ENCODE measurements at regions of chr1 and their contacts with region 1.

Region 1: GRCh38 chr1:235160957-235161684 is at the start of gene RBM34:
- DNase-seq: peak; percentile 94
- H3K4me3 Mint-ChIP-seq: peak within 1 kb of the TSS; percentile 100
- H3K27ac Mint-ChIP-seq: peak within 1 kb of the TSS; percentile 99
- H3K4me1 Mint-ChIP-seq: peaks cover 26% of the 10 kb centered on the region
- H3K27me3 Mint-ChIP-seq: no peaks in the 10 kb centered on the region
- total RNA-seq, gene RBM34: 104 TPM

Region 2: GRCh38 chr1:235090401-235091069 is 70.6 kb before region 1 on chr1:
- CTCF ChIA-PET with region 1: no interaction called
- intact Hi-C with region 1: no loop called
- DNase-seq: no peak
- H3K4me3 Mint-ChIP-seq: no peak overlapping the region
- H3K27ac Mint-ChIP-seq: no peak overlapping the region
- H3K4me1 Mint-ChIP-seq: peaks cover 7% of the 10 kb centered on the region
- H3K27me3 Mint-ChIP-seq: peaks cover 2% of the 10 kb centered on the region

Region 3: DNA sequence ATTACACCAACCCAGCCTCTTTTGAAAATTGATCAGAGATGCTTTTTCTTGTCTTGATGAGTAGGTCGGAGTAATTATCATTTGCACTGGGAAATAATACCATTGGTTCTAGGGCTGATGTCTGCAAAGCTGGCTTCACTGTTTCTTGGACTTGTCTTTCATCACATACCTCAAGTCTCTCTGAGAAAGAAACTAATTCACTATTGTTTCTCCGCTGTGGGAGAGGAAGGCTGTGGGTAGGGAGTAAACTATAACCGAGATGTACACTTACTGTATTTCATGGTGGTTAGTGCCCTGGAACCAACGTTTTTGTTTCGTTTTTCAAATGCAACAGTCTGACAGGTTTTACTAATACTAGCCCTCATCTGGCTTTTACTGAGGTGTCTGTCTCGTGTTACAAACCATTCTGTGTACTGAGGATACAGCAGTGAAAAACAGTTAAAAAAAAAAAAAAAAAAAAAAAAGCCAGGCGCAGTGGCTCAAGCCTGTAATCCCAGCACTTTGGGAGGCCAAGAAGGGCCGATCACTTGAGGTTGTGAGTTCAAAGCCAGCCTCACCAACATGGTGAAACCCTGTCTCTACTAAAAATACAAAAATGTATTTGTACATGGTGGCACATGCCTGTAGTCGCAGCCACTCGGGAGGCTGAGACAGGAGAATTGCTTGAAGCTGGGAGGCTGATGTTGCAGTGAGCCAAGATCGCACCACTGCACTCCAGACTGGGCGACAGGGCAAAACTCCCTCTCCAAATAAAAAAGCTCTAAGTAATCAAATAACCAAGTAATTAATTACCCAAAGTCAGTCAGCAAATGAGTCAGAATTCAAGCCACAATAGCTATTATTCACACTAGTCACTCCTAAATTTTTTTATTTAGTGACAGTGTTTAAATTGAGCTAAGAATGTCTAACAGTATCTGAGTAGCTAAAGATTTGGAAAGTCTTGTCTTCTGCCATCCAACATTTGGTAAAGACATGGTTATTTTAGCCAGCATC is 55.8 kb before region 1 on chr1:
- CTCF ChIA-PET with region 1: interaction called, 4 read pairs
- intact Hi-C with region 1: loop called (anchors 1 kb)
- DNase-seq: no peak
- H3K4me3 Mint-ChIP-seq: no peak overlapping the region
- H3K27ac Mint-ChIP-seq: no peak overlapping the region
- H3K4me1 Mint-ChIP-seq: peaks cover 44% of the 10 kb centered on the region
- H3K27me3 Mint-ChIP-seq: no peaks in the 10 kb centered on the region

Region 4: GRCh38 chr1:235128456-235129328 is 32.4 kb before region 1 on chr1 and contains the start of gene TOMM20:
- CTCF ChIA-PET with region 1: no interaction called
- intact Hi-C with region 1: loop called (anchors 1 kb)
- DNase-seq: peak; percentile 98
- H3K4me3 Mint-ChIP-seq: peak within 1 kb of the TSS; percentile 96
- H3K27ac Mint-ChIP-seq: peak within 1 kb of the TSS; percentile 94
- H3K4me1 Mint-ChIP-seq: peaks cover 38% of the 10 kb centered on the region
- H3K27me3 Mint-ChIP-seq: no peaks in the 10 kb centered on the region
- total RNA-seq, gene TOMM20: 155 to 192 TPM

Region 5: DNA sequence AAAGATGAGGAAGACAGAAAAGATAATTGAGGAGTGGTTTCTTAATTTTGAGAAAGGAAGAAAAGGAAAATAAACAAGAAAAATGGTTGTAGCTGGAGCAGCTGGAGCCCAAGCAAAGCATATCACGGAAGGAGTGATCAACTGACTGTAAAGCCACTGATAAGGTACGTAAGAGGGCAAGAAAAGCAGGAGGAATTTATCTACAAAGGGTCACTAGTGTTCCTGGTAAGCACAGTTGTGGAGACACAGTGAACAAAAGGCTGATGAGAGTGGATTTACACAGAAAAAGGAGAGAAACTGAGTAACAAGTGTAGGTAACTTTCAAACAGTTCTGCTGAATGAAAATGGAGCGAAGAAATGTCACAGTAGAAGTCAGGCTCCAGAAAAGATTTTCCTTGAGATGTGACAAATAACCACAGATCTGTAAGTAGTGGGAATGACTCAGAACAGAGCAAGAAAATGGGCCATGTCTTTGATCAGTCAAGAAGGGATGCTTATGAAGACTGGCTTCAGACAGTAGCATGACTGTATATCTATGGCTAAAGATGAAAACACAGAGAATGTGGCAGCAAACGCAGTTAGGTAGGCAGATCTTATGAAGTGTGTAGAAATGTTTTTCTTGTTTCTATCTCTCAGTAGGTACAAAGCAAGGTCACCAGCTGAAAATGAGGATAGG is 45.5 kb after region 1 on chr1:
- CTCF ChIA-PET with region 1: no interaction called
- intact Hi-C with region 1: loop called (anchors 1 kb)
- DNase-seq: peak; percentile 35
- H3K4me3 Mint-ChIP-seq: peak overlapping the region; percentile 19
- H3K27ac Mint-ChIP-seq: peak overlapping the region; percentile 83
- H3K4me1 Mint-ChIP-seq: peaks cover 28% of the 10 kb centered on the region
- H3K27me3 Mint-ChIP-seq: no peaks in the 10 kb centered on the region

Region 6: GRCh38 chr1:235367000-235367908 is 206.1 kb after region 1 on chr1 and contains the start of gene TBCE:
- CTCF ChIA-PET with region 1: no interaction called
- intact Hi-C with region 1: loop called (anchors 2 kb)
- DNase-seq: peak; percentile 92
- H3K4me3 Mint-ChIP-seq: peak within 1 kb of the TSS; percentile 96
- H3K27ac Mint-ChIP-seq: peak within 1 kb of the TSS; percentile 90
- H3K4me1 Mint-ChIP-seq: peaks cover 27% of the 10 kb centered on the region
- H3K27me3 Mint-ChIP-seq: no peaks in the 10 kb centered on the region
- total RNA-seq, gene TBCE: 18.8 to 22.1 TPM

Region 7: DNA sequence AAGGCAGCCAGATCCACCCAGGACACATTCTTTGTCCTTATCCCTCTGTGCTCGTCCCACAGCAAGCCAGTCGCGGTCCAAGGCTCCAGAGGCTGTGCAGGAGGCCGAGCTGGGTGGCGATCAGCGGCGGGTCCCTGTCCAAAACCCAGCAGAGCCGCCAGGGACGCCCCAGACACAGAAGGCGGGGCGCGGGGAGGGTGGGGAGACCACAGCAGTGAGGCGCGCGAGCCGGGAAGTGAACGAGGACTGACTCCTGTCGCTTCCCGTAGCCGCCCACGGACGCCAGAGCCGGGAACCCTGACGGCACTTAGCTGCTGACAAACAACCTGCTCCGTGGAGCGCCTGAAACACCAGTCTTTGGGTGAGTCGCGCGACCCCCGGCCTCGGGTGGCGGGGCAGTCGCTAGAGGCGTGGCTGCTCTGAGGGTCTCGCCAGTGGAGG is 1362.6 kb after region 1 on chr1 and contains the start of gene LGALS8:
- CTCF ChIA-PET with region 1: no interaction called
- intact Hi-C with region 1: loop called (anchors 5 kb)
- DNase-seq: peak; percentile 91
- H3K4me3 Mint-ChIP-seq: peak within 1 kb of the TSS; percentile 96
- H3K27ac Mint-ChIP-seq: peak within 1 kb of the TSS; percentile 97
- H3K4me1 Mint-ChIP-seq: peaks cover 9% of the 10 kb centered on the region
- H3K27me3 Mint-ChIP-seq: no peaks in the 10 kb centered on the region
- total RNA-seq, gene LGALS8: 78.6 to 89.4 TPM

Region 8: DNA sequence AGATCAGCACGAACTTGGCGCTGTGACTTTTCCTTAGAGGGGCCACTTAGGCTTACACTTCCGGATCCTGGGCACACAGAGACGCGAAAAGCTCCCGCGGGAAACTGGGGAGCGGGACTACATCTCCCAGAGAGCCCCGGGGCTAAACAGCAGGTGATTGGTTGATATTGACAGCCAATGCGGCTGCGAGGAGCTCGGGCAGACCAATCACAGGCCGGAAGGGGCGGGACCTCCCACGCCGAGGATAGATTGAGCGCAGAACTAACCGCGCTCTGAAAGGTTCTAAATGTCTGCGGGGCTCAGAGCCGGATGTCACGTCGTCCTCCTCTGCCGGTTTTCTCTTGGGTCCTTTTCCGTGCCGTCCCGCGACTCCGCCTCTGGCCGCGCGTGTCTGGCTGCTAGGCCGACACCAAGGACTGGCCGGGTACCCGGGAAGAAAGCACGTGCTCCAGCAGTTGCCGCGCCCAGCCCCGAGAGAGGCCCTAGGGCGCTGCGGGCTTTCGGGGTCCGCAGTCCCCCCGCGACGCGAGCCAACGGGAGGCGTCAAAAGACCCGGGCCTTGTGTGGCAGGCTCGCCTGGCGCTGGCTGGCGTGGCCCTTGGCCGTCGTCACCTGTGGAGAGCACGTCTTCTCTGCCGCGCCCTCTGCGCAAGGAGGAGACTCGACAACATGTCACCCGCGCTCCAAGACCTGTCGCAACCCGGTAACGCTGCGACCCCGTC is 1634.1 kb after region 1 on chr1 and contains the start of gene MTR:
- CTCF ChIA-PET with region 1: no interaction called
- intact Hi-C with region 1: loop called (anchors 10 kb)
- DNase-seq: peak; percentile 98
- H3K4me3 Mint-ChIP-seq: peak within 1 kb of the TSS; percentile 80
- H3K27ac Mint-ChIP-seq: peak within 1 kb of the TSS; percentile 86
- H3K4me1 Mint-ChIP-seq: peaks cover 27% of the 10 kb centered on the region
- H3K27me3 Mint-ChIP-seq: no peaks in the 10 kb centered on the region
- total RNA-seq, gene MTR: 55.3 to 57.6 TPM